ENCODE measurements at regions of chr12 and their contacts with region 1.

Region 1: DNA sequence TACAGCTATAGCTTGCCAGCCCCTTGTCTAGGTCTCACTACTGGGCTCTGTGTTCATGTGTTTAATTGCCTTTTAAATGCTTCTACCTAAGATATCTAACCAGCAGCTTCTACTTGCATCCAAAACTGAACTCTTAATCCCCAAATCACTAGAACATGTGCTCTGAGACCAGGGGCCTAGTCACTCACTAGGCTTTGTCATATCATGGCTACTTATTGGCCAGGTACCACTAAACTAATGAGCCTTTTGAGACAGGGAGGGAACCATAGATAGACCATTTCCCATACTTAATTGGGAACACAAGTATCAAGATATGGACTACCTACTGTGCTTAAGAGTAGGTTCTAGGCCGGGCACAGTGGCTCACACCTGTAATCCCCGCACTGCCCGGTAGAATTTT is 6.5 kb downstream of the HSP90B1 start:
- DNase-seq: no peak
- ATAC-seq: no peak
- H3K4me3 Mint-ChIP-seq: no peak overlapping the region
- H3K27ac Mint-ChIP-seq: peak overlapping the region; percentile 55
- H3K4me1 Mint-ChIP-seq: peaks cover 77% of the 10 kb centered on the region
- H3K27me3 Mint-ChIP-seq: no peaks in the 10 kb centered on the region
- CTCF ChIP-seq: no peak

Region 2: DNA sequence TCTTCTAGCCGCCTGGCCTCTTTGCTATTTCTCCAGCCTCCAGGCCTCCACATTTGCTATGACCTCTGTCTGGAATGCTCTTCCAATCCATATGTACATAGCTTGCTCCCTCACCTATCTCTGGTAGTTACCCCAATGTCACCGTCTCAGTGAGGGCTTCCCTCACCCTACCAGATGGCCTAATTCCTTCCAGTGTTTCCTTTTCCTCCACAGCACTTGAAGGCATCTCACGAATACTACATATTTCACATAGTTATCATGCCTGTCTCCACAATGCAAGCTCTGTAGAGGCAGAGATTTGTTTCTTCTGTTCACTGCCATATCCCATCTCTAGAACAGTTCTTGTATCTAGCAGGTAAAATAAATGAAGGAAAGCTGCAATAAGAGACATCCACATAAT is 27.8 kb before region 1 on chr12:
- CTCF ChIA-PET with region 1: no interaction called
- POLR2A ChIA-PET with region 1: interaction called, 90 read pairs
- intact Hi-C with region 1: no loop called
- DNase-seq: no peak
- ATAC-seq: no peak
- H3K4me3 Mint-ChIP-seq: no peak overlapping the region
- H3K27ac Mint-ChIP-seq: no peak overlapping the region
- H3K4me1 Mint-ChIP-seq: peaks cover 49% of the 10 kb centered on the region
- H3K27me3 Mint-ChIP-seq: no peaks in the 10 kb centered on the region
- CTCF ChIP-seq: no peak

Region 3: DNA sequence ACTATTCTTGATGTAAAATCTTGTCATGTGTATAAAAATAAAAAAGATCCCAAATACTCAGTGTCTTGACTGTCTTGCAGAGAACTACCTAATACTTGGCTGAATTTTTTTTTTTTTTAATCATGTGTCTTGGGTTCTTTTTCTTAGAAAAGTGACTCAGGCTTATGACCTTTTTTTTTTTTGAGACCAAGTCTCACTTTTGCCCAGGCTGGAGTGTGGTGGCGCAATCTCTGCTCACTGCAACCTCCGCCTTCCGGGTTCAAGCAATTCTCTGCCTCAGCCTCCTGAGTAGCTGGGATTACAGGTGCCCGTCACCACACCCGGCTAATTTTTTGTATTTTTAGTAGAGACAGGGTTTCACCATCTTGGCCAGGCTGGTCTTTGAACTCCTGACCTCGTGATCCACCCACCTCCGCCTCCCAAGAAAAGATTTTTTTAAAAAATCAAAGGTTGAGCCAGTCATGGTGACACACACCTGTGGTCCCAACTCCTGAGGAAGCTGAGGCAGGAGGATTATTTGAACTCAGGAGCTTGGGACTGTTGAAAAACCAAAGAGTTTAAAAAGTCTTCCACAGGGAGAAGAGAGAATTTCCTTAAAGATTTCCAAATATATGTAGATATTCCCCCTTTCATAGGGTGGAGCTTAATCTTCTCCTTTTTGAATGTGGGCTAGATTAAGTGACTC is 11.3 kb after region 1 on chr12:
- CTCF ChIA-PET with region 1: interaction called, 6 read pairs
- POLR2A ChIA-PET with region 1: interaction called, 37 read pairs
- intact Hi-C with region 1: no loop called
- DNase-seq: peak; percentile 48
- ATAC-seq: peak; percentile 37
- H3K4me3 Mint-ChIP-seq: no peak overlapping the region
- H3K27ac Mint-ChIP-seq: peak overlapping the region; percentile 71
- H3K4me1 Mint-ChIP-seq: peaks cover 60% of the 10 kb centered on the region
- H3K27me3 Mint-ChIP-seq: no peaks in the 10 kb centered on the region
- CTCF ChIP-seq: no peak

Region 4: DNA sequence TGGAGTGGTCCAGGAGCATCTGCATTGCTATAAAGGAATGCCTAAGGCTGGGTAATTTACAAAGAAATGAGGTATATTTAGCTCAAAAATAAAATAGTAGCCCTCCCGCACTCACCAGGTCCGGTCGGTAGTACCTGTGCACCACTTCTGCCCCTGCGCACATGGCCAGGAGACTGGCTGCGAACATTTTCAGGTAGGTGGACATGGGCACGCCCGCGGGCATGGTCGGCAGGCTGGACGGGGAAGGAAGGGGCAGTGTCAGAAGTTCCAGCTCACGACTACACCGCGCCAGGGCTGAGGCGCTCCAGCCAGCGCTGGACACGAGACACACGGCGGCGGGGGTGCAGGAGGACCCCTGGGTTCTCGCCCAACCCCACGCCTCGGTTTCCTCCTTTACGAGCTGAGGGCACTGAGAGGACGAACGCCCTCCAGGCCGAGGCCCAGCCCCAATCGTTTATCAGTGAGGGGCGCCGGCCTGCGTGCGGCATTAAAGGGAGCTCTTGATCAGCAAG is 19.9 kb after region 1 on chr12:
- CTCF ChIA-PET with region 1: interaction called, 6 read pairs
- POLR2A ChIA-PET with region 1: interaction called, 19 read pairs
- intact Hi-C with region 1: no loop called
- DNase-seq: peak; percentile 27
- ATAC-seq: no peak
- H3K4me3 Mint-ChIP-seq: peak overlapping the region; percentile 93
- H3K27ac Mint-ChIP-seq: peak overlapping the region; percentile 95
- H3K4me1 Mint-ChIP-seq: peaks cover 41% of the 10 kb centered on the region
- H3K27me3 Mint-ChIP-seq: no peaks in the 10 kb centered on the region
- CTCF ChIP-seq: no peak

Region 5: DNA sequence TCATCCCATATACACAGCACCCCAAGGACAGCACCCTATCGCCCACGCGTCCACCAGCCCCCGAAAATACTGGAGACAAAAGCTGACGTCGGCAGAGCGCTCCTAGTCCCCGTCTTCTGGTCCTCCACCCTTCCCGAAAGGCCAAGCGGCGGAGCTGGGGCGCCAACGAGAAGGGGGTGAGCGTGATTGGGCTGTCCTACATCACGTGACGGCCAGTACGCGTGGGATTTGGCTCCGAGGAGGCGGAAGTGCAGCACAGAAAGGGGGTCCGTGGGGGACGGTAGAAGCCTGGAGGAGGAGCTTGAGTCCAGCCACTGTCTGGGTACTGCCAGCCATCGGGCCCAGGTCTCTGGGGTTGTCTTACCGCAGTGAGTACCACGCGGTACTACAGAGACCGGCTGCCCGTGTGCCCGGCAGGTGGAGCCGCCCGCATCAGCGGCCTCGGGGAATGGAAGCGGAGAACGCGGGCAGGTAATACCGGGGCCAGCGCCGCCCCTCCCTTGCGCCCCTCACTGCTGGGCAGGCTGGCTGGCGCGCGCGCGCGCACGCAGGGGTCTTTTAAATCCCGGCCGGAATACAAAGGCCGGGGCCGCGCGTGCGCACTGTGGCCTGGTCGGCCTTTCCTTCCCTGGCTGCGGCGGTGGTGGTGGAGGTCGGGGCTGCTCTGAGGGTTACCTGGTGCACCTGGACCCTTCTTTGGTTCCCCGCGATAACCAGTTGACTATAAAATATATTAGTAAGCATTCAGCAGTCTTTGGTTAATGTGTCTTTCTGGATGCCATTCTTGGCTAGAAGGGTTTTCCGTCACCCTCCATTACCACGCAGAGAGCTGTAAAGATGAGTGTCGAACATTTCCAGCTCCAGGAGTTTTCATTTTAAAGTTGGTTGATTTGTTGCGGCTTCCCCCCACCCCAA is 29.2 kb after region 1 on chr12 and contains the start of gene TDG:
- CTCF ChIA-PET with region 1: no interaction called
- POLR2A ChIA-PET with region 1: interaction called, 12 read pairs
- intact Hi-C with region 1: no loop called
- DNase-seq: peak; percentile 99
- ATAC-seq: peak; percentile 94
- H3K4me3 Mint-ChIP-seq: peak within 1 kb of the TSS; percentile 90
- H3K27ac Mint-ChIP-seq: peak within 1 kb of the TSS; percentile 98
- H3K4me1 Mint-ChIP-seq: peaks cover 40% of the 10 kb centered on the region
- H3K27me3 Mint-ChIP-seq: no peaks in the 10 kb centered on the region
- CTCF ChIP-seq: no peak
- total RNA-seq, gene TDG: 37.4 to 37.5 TPM